ENCODE measurements at regions of chr3 and their contacts with region 1.

Region 1: GRCh38 chr3:123258811-123259420 is 57.2 kb downstream of the SEC22A start:
- DNase-seq: peak; percentile 68
- H3K4me3 ChIP-seq: no peak overlapping the region
- H3K27ac ChIP-seq: no peak overlapping the region
- H3K4me1 ChIP-seq: peaks cover 7% of the 10 kb centered on the region
- CTCF ChIP-seq: peak; percentile 88

Region 2: GRCh38 chr3:122942937-122943827 is 315.7 kb before region 1 on chr3:
- CTCF ChIA-PET with region 1: no interaction called
- POLR2A ChIA-PET with region 1: no interaction called
- intact Hi-C with region 1: loop called (anchors 5 kb)
- DNase-seq: peak; percentile 36
- H3K4me3 ChIP-seq: no peak overlapping the region
- H3K27ac ChIP-seq: no peak overlapping the region
- H3K4me1 ChIP-seq: no peaks in the 10 kb centered on the region
- CTCF ChIP-seq: peak; percentile 91